CD4-positive, alpha-beta T cell (primary cell): ENCODE measurements at regions of chr5 and their contacts with region 1.

Region 1: GRCh38 chr5:178075840-178076548 is 37.3 kb upstream of the N4BP3 start:
- DNase-seq: peak; percentile 72 to 89 (median 77)
- ATAC-seq: peak; percentile 93
- H3K4me3 ChIP-seq: no peak overlapping the region
- H3K4me3 Mint-ChIP-seq: peak overlapping the region; percentile 48
- H3K27ac ChIP-seq: no peak overlapping the region
- H3K27ac Mint-ChIP-seq: no peak overlapping the region
- H3K4me1 ChIP-seq: peaks cover 6% of the 10 kb centered on the region
- H3K4me1 Mint-ChIP-seq: peaks cover 6% of the 10 kb centered on the region
- H3K27me3 ChIP-seq: peaks cover 0 to 4% of the 10 kb centered on the region in 2 experiments
- H3K27me3 Mint-ChIP-seq: peaks cover 12% of the 10 kb centered on the region
- CTCF ChIP-seq: peak; percentile 99

Region 2: GRCh38 chr5:178113199-178113787 is 37.3 kb after region 1 on chr5 and contains the start of gene N4BP3:
- CTCF ChIA-PET with region 1: interaction called, 4 read pairs
- POLR2A ChIA-PET with region 1: no interaction called
- intact Hi-C with region 1: loop called in 1 of 2 experiments (anchors 5 kb)
- DNase-seq: peak; percentile 55 to 93 (median 75)
- ATAC-seq: peak; percentile 69
- H3K4me3 ChIP-seq: peak within 1 kb of the TSS; percentile 55
- H3K4me3 Mint-ChIP-seq: peak within 1 kb of the TSS; percentile 95
- H3K27ac ChIP-seq: no peak within 1 kb of the TSS
- H3K27ac Mint-ChIP-seq: peak within 1 kb of the TSS; percentile 71
- H3K4me1 ChIP-seq: peaks cover 51% of the 10 kb centered on the region
- H3K4me1 Mint-ChIP-seq: peaks cover 40% of the 10 kb centered on the region
- H3K27me3 ChIP-seq: peaks cover 0 to 7% of the 10 kb centered on the region in 2 experiments
- H3K27me3 Mint-ChIP-seq: no peaks in the 10 kb centered on the region
- CTCF ChIP-seq: no peak
- total RNA-seq, gene N4BP3: 3.8 to 4.3 TPM

Region 3: GRCh38 chr5:178163772-178164735 is 88.1 kb after region 1 on chr5:
- CTCF ChIA-PET with region 1: interaction called, 13 read pairs
- POLR2A ChIA-PET with region 1: interaction called, 4 read pairs
- intact Hi-C with region 1: loop called (anchors 1 kb)
- DNase-seq: peak; percentile 82 to 97 (median 92)
- ATAC-seq: peak; percentile 100
- H3K4me3 ChIP-seq: no peak overlapping the region
- H3K4me3 Mint-ChIP-seq: no peak overlapping the region
- H3K27ac ChIP-seq: no peak overlapping the region
- H3K27ac Mint-ChIP-seq: no peak overlapping the region
- H3K4me1 ChIP-seq: peaks cover 7% of the 10 kb centered on the region
- H3K4me1 Mint-ChIP-seq: peaks cover 10% of the 10 kb centered on the region
- H3K27me3 ChIP-seq: no peaks in the 10 kb centered on the region
- H3K27me3 Mint-ChIP-seq: peaks cover 18% of the 10 kb centered on the region
- CTCF ChIP-seq: peak; percentile 92